Activated CD4-positive, alpha-beta memory T cell treated with anti-CD3 and anti-CD28 coated beads for 36 hours (primary cell): ENCODE measurements at regions of chr9 and their contacts with region 1.

Region 1: DNA sequence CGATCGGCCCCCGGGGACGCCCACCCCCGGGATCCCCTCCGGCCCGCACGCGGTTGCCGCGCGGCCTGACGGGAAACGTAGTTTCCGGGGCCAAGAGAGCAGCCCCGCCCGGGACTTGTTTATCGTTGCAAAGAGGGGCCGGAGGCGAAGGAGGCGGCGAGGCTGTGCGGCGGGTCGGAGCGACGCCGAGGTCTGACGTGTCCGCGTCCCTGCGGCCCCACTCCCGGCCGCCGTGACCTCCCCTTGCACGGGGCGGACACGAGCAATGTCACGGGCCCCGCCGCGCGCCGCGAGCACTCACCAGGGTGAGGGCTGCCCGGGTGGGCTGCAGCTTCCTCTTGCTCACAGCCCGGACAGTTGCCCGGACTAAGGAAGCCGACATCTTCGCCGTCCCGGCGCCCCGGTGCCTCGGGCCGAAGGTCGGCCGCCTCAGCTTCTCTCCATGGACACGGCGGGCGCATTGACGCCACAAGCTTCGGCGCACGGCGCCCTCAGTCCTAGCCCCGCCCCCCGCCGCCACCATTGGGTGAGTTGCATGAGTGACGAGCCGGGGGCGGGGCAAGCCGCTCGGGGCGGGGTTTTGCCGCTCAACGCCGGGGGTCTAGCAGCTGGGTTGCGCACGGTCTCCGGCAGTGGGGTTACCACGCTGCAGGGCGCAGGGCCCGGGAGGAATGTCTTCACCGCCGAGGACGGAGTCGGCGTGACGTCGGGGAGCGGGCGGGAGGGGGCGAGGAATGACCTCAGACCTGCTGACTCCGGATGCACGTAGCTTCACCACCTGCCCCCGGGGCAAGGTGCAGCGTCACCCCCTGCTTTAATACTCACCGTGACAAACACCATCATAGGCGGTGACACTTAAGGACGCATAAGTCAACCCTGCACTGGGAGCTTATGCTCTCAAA is at the start of gene ISCA1:
- DNase-seq: peak; percentile 97
- H3K4me3 Mint-ChIP-seq: peak within 1 kb of the TSS; percentile 92
- H3K27ac Mint-ChIP-seq: peak within 1 kb of the TSS; percentile 96
- H3K4me1 Mint-ChIP-seq: peaks cover 44% of the 10 kb centered on the region
- H3K27me3 Mint-ChIP-seq: no peaks in the 10 kb centered on the region
- total RNA-seq, gene ISCA1: 21.4 to 22.1 TPM

Region 2: GRCh38 chr9:85940832-85941621 is 341.3 kb before region 1 on chr9 and contains the start of gene NAA35:
- CTCF ChIA-PET with region 1: no interaction called
- POLR2A ChIA-PET with region 1: interaction called, 3 read pairs
- intact Hi-C with region 1: loop called (anchors 1 kb)
- DNase-seq: peak; percentile 99
- H3K4me3 Mint-ChIP-seq: no peak within 1 kb of the TSS
- H3K27ac Mint-ChIP-seq: peak within 1 kb of the TSS; percentile 96
- H3K4me1 Mint-ChIP-seq: peaks cover 15% of the 10 kb centered on the region
- H3K27me3 Mint-ChIP-seq: no peaks in the 10 kb centered on the region
- total RNA-seq, gene NAA35: 23.0 to 24.3 TPM

Region 3: DNA sequence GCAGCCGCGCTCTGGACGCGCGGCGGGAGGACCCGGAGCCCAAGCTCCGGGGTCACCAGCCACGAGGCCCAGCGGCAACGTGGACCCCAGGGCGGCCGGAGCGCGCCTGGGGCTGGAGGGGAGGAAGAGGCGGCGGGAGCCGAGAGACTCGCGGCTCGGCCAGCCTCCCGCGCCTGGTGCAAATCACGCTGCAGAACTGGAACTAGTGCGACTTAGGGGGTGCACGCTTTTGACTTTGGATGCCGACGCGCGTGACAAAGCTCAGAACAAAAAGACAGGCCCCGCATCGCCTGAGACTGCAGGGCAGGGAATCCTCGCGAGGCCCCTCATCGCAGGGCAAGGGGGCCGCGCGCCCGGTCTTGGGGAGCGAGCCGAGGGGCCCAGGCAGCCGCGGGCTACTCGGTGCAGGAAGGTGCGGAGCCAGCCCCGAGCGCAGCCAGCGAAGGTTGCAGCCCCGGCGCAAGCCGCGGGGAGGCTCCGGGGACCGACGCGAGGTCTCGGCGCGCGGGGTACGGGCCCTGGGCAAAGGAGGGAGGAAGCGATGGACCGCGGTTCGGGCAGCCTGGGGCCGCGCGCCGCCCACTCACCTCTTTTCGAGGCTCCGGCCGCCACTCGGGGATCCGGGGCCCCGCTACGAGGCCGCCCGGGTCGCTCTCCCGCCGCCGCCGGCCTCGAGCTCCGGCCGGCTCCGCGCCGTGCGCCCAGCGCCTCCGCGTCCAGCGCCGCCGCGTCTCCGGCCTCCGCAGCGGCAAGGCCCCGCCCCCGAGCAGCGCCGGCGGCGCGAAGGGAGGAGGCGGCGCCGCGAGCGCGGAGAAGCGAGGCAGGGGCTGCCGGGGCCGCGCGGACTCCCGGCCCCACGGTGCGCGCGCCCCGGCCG is 183.3 kb before region 1 on chr9 and contains the start of gene GOLM1:
- CTCF ChIA-PET with region 1: no interaction called
- POLR2A ChIA-PET with region 1: no interaction called
- intact Hi-C with region 1: loop called (anchors 2 kb)
- DNase-seq: peak; percentile 47
- H3K4me3 Mint-ChIP-seq: peak within 1 kb of the TSS; percentile 73
- H3K27ac Mint-ChIP-seq: no peak within 1 kb of the TSS
- H3K4me1 Mint-ChIP-seq: peaks cover 8% of the 10 kb centered on the region
- H3K27me3 Mint-ChIP-seq: peaks cover 38% of the 10 kb centered on the region
- total RNA-seq, gene GOLM1: 2.0 to 2.1 TPM

Region 4: DNA sequence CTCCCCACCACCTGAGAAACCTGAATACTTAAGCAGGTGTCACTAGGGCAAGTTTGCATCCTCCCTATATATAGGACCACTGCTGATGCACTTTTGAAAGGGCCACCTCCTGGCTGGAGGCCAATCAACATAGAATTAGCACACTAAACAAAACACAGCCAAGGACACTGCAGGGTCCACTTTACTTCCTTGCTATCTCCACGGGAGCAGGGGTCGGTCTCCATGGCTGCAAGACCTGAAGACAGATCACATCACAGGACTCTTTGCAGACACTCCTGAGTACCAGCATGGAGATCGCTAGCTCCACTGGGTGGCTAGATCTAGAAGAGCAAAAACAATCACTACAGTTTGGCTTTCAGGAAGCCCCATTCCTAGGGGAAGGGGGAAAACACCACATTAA is 95.2 kb before region 1 on chr9:
- CTCF ChIA-PET with region 1: no interaction called
- POLR2A ChIA-PET with region 1: no interaction called
- intact Hi-C with region 1: no loop called
- DNase-seq: no peak
- H3K4me3 Mint-ChIP-seq: no peak overlapping the region
- H3K27ac Mint-ChIP-seq: no peak overlapping the region
- H3K4me1 Mint-ChIP-seq: no peaks in the 10 kb centered on the region
- H3K27me3 Mint-ChIP-seq: peaks cover 17% of the 10 kb centered on the region

Region 5: GRCh38 chr9:86303316-86303975 is 21.1 kb after region 1 on chr9:
- CTCF ChIA-PET with region 1: no interaction called
- POLR2A ChIA-PET with region 1: no interaction called
- intact Hi-C with region 1: loop called (anchors 1 kb)
- DNase-seq: peak; percentile 68
- H3K4me3 Mint-ChIP-seq: peak overlapping the region; percentile 23
- H3K27ac Mint-ChIP-seq: peak overlapping the region; percentile 90
- H3K4me1 Mint-ChIP-seq: peaks cover 38% of the 10 kb centered on the region
- H3K27me3 Mint-ChIP-seq: no peaks in the 10 kb centered on the region

Region 6: DNA sequence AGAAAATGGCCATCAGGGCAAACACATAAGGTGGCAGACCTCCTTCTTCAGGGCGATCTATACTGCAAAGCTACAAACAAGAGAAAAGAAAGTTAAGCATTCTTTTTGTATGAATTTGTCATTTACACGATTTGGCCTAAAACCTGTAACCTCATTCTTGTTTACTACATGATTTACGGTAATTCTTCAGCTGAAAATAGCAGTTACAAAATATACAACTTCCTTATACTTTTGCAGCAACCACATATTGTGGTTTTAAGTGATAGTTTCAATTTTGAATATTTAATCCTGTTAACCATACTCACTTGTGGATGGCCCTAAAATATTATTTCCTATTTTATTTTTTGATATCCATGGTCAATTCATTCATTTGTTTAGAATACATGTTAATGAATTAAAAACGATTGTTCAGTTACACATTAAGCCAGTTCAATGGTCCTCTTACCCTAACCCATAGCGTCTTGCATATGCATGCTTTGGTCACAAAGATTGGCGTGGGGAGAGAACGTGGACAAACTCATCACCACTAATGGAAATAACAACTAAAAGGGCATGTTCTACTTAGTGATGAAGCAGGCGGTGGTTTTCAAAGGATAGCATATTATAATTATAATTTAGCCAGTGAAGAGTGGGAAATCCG is 55.3 kb after region 1 on chr9:
- CTCF ChIA-PET with region 1: no interaction called
- POLR2A ChIA-PET with region 1: interaction called, 5 read pairs
- intact Hi-C with region 1: loop called (anchors 5 kb)
- DNase-seq: no peak
- H3K4me3 Mint-ChIP-seq: peak overlapping the region; percentile 36
- H3K27ac Mint-ChIP-seq: no peak overlapping the region
- H3K4me1 Mint-ChIP-seq: peaks cover 49% of the 10 kb centered on the region
- H3K27me3 Mint-ChIP-seq: no peaks in the 10 kb centered on the region

Region 7: DNA sequence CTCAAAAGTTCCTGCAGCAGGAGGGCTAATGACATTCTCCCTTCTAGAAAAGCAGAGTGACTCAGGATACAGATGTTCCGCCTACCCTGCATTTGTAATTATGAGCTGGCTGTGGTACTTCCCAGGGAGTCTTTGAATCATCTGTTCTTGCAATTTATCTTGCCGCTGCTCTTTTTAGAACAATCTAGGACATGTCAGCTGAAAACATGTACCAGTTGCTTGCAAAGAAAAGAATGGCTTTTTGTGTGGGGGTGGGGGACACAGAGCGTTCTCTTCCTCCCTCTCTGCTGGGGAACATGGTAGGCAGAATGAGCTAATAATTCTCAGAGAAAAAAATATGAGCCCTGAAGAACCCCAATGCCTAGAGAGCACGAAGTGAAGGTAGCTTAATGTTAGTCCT is 123.6 kb after region 1 on chr9:
- CTCF ChIA-PET with region 1: no interaction called
- POLR2A ChIA-PET with region 1: interaction called, 3 read pairs
- intact Hi-C with region 1: loop called (anchors 5 kb)
- DNase-seq: peak; percentile 57
- H3K4me3 Mint-ChIP-seq: peak overlapping the region; percentile 17
- H3K27ac Mint-ChIP-seq: peak overlapping the region; percentile 40
- H3K4me1 Mint-ChIP-seq: peaks cover 20% of the 10 kb centered on the region
- H3K27me3 Mint-ChIP-seq: peaks cover 21% of the 10 kb centered on the region

Region 8: GRCh38 chr9:86948074-86948929 is 666.0 kb after region 1 on chr9:
- CTCF ChIA-PET with region 1: no interaction called
- POLR2A ChIA-PET with region 1: no interaction called
- intact Hi-C with region 1: loop called (anchors 5 kb)
- DNase-seq: peak; percentile 83
- H3K4me3 Mint-ChIP-seq: peak overlapping the region; percentile 75
- H3K27ac Mint-ChIP-seq: no peak overlapping the region
- H3K4me1 Mint-ChIP-seq: peaks cover 11% of the 10 kb centered on the region
- H3K27me3 Mint-ChIP-seq: peaks cover 19% of the 10 kb centered on the region